ENCODE measurements at regions of chr2 and their contacts with region 1.

Region 1: GRCh38 chr2:20516646-20517341 is 69.9 kb downstream of the RHOB start:
- DNase-seq: peak; percentile 59
- H3K4me3 ChIP-seq: no peak overlapping the region
- H3K27ac ChIP-seq: peak overlapping the region; percentile 40
- H3K4me1 ChIP-seq: peaks cover 31% of the 10 kb centered on the region
- H3K27me3 ChIP-seq: no peaks in the 10 kb centered on the region
- CTCF ChIP-seq: no peak

Region 2: DNA sequence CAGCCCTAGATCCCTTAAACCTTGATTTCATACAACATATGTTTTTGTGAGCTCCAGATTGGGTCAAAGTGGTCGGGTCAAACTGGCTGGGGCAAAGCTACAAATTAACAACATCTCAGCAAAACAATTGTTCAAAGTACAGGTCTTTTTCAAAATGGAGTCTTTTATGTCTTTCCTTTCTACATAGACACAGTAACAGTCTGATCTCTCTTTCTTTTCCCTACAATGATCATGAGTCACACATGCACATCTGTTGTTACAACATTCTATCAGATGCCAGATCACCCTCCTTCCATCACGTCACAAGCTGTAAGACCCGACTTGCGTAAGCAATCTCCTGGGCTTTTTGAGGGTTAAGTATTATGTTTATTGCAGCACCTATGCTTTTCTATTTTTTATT is 14.8 kb before region 1 on chr2:
- CTCF ChIA-PET with region 1: no interaction called
- dilution Hi-C with region 1: no loop called
- in situ Hi-C with region 1: no loop called
- intact Hi-C with region 1: no loop called
- DNase-seq: peak; percentile 92
- H3K4me3 ChIP-seq: no peak overlapping the region
- H3K27ac ChIP-seq: peak overlapping the region; percentile 36
- H3K4me1 ChIP-seq: peaks cover 9% of the 10 kb centered on the region
- H3K27me3 ChIP-seq: no peaks in the 10 kb centered on the region
- CTCF ChIP-seq: no peak

Region 3: GRCh38 chr2:20539776-20540586 is 23.2 kb after region 1 on chr2:
- CTCF ChIA-PET with region 1: no interaction called
- dilution Hi-C with region 1: no loop called
- in situ Hi-C with region 1: no loop called
- intact Hi-C with region 1: loop called (anchors 1 kb)
- DNase-seq: no peak
- H3K4me3 ChIP-seq: no peak overlapping the region
- H3K27ac ChIP-seq: no peak overlapping the region
- H3K4me1 ChIP-seq: peaks cover 8% of the 10 kb centered on the region
- H3K27me3 ChIP-seq: no peaks in the 10 kb centered on the region
- CTCF ChIP-seq: no peak

Region 4: GRCh38 chr2:20568501-20569463 is 52.0 kb after region 1 on chr2:
- CTCF ChIA-PET with region 1: no interaction called
- dilution Hi-C with region 1: loop called (anchors 5 kb)
- in situ Hi-C with region 1: no loop called
- intact Hi-C with region 1: no loop called
- DNase-seq: peak; percentile 43
- H3K4me3 ChIP-seq: no peak overlapping the region
- H3K27ac ChIP-seq: no peak overlapping the region
- H3K4me1 ChIP-seq: peaks cover 17% of the 10 kb centered on the region
- H3K27me3 ChIP-seq: no peaks in the 10 kb centered on the region
- CTCF ChIP-seq: no peak

Region 5: GRCh38 chr2:20578895-20579825 is 62.4 kb after region 1 on chr2:
- CTCF ChIA-PET with region 1: interaction called, 4 read pairs
- dilution Hi-C with region 1: no loop called
- in situ Hi-C with region 1: no loop called
- intact Hi-C with region 1: loop called (anchors 1 kb)
- DNase-seq: peak; percentile 97
- H3K4me3 ChIP-seq: no peak overlapping the region
- H3K27ac ChIP-seq: peak overlapping the region; percentile 88
- H3K4me1 ChIP-seq: peaks cover 41% of the 10 kb centered on the region
- H3K27me3 ChIP-seq: no peaks in the 10 kb centered on the region
- CTCF ChIP-seq: no peak

Region 6: GRCh38 chr2:20595431-20596192 is 78.8 kb after region 1 on chr2:
- CTCF ChIA-PET with region 1: no interaction called
- dilution Hi-C with region 1: loop called (anchors 5 kb)
- in situ Hi-C with region 1: no loop called
- intact Hi-C with region 1: no loop called
- DNase-seq: peak; percentile 51
- H3K4me3 ChIP-seq: no peak overlapping the region
- H3K27ac ChIP-seq: no peak overlapping the region
- H3K4me1 ChIP-seq: peaks cover 30% of the 10 kb centered on the region
- H3K27me3 ChIP-seq: no peaks in the 10 kb centered on the region
- CTCF ChIP-seq: no peak

Region 7: DNA sequence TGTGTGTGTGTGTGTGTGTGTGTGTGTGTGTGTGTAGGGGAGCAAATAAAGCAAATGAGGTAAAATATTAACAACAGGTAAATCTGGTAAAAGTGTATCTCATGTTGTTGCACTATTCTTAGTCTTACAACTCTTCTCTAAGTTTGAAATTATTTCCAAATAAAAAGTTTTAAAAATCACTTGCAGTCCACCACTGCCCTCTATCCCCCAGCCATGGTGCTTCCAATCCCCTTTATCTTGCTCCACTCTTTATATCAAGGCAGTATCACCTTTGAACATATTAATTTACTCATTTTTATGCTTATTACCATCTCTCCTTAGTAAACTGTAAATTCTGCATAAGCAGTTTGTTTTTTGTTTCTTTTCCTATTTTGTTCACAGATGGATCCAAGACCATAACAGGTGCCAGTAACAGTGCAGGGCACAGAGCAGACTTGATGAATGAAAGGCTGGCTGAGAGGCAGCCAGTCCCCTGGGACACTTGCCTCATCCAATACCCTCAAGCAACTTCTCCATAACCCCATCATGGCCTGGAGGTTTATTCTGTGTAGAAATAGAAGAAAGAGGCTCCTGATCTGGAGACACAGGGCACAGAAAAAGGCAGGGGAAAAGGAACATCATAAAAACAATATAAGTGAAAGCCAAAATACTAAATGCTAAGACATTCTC is 238.5 kb after region 1 on chr2:
- CTCF ChIA-PET with region 1: no interaction called
- dilution Hi-C with region 1: no loop called
- in situ Hi-C with region 1: no loop called
- intact Hi-C with region 1: no loop called
- DNase-seq: no peak
- H3K4me3 ChIP-seq: no peak overlapping the region
- H3K27ac ChIP-seq: no peak overlapping the region
- H3K4me1 ChIP-seq: no peaks in the 10 kb centered on the region
- H3K27me3 ChIP-seq: no peaks in the 10 kb centered on the region
- CTCF ChIP-seq: no peak

Measured in mammary epithelial cell (primary cell).